Panc1 (cell line): ENCODE measurements at regions of chr5 and their contacts with region 1.

Region 1: DNA sequence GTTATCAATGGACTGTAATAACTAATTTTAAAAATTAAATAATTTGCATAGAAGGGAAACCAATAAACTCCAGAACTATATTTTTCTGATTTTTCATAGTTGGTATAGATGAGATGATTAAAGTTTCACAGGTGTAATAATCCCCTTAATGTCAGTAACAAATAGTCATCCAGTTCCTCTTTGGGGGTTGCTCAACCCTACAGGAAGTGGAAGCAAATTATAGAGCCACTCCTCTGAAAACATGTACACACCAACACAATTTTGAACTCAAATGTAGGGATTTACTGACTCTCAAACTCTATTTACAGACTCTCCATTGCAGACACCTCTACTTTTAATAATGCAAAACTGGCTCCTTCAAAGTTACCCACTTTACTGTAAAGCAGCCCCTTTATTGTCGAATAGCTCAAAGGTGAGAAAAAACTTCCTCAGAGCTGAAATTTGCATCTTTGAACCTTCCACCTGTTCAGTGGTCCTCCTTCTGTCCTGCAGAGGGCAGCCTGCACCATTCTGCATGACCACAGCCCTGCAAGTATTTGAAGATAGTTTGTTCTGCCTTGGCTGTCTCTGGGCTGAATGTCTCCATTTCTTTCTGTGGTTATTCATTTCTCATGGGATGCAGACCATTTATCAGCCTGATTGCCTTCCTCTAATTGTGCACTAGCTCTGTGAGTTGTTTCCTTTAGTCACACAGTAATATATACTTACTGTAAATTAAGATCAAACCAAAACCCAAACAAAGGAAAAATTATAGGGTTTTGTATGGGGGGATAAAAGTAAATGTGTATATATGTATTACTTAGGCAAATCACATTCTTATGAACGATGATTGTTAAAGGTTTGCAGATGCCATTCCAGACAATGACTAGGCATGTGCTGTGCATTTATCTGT is 383.2 kb upstream of the SGCD start:
- DNase-seq: no peak
- ATAC-seq: no peak
- H3K4me3 ChIP-seq: no peak overlapping the region
- H3K27ac ChIP-seq: no peak overlapping the region
- H3K4me1 ChIP-seq: no peaks in the 10 kb centered on the region
- H3K27me3 ChIP-seq: no peaks in the 10 kb centered on the region
- CTCF ChIP-seq: peak; percentile 81

Region 2: GRCh38 chr5:156815988-156816599 is 872.3 kb after region 1 on chr5:
- CTCF ChIA-PET with region 1: no interaction called
- POLR2A ChIA-PET with region 1: no interaction called
- in situ Hi-C with region 1: no loop called
- intact Hi-C with region 1: loop called (anchors 5 kb)
- DNase-seq: no peak
- ATAC-seq: no peak
- H3K4me3 ChIP-seq: no peak overlapping the region
- H3K27ac ChIP-seq: no peak overlapping the region
- H3K4me1 ChIP-seq: no peaks in the 10 kb centered on the region
- H3K27me3 ChIP-seq: no peaks in the 10 kb centered on the region
- CTCF ChIP-seq: peak; percentile 66

Region 3: DNA sequence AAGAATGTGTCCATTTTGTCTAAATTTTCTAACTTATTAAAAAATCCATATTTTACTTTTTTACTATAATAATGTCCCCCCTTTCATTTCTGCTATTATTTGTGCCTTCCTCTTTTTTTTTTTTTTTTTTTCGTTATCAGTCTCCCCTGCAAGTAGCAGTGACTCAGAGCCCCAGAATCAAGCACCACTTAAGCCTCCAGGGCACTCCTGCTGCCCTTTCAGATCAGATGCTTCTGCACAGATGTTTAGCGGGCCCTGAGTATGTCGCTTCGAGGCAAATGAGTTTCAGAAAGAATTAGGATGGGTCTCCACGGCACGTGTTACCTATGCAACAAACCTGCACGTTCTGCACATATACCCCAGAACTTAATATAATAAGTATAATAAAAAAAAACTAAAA is 1187.2 kb after region 1 on chr5:
- CTCF ChIA-PET with region 1: no interaction called
- POLR2A ChIA-PET with region 1: no interaction called
- in situ Hi-C with region 1: no loop called
- intact Hi-C with region 1: loop called (anchors 5 kb)
- DNase-seq: no peak
- ATAC-seq: no peak
- H3K4me3 ChIP-seq: no peak overlapping the region
- H3K27ac ChIP-seq: no peak overlapping the region
- H3K4me1 ChIP-seq: no peaks in the 10 kb centered on the region
- H3K27me3 ChIP-seq: no peaks in the 10 kb centered on the region
- CTCF ChIP-seq: no peak